IMR-90 (cell line): ENCODE measurements at regions of chr5 and their contacts with region 1.

Region 1: DNA sequence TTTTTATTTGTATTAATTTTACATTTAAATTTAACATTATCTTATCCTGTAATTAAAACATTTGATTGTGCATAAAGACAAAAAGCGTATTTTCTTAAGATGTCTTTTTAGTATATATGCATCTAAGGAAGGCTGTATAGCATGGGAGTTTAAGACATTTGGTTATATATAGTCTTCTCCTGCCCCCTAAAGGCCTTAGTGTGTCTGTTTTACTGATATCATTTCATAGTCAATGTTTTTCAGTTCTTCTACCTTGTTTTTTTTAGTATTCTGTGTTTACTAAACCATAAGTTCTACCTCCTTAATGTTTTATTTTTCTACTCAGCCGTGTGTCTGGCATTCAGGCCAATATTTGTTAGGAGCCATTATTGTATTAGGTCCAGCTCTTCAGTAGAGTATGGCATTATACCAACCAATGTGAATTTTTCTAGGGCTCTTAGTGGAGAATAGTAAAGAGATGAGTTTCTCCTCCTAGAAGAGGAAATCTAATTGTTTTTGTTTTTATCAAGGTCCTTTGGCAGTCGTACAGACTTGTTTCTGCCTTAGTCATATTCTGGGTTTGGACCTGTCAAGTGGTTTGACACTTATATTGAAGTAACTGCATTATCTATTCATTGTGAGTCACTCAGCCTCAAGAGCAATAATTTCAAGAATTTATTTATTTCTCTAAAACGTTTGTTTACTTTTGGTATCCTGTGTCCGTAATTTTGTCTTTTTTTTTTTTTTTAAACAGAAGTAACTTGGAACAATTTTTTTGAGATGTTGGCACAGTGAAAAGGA is 74.8 kb downstream of the SLF1 start:
- DNase-seq: peak; percentile 93
- ATAC-seq: peak; percentile 80
- H3K4me3 ChIP-seq: no peak overlapping the region
- H3K27ac ChIP-seq: no peak overlapping the region
- H3K4me1 ChIP-seq: peaks cover 4% of the 10 kb centered on the region
- H3K27me3 ChIP-seq: no peaks in the 10 kb centered on the region
- CTCF ChIP-seq: peak; percentile 49
- POLR2A ChIP-seq: no peak
- RAD21 ChIP-seq: peak; percentile 50

Region 2: GRCh38 chr5:93915142-93915553 is 778.1 kb before region 1 on chr5:
- CTCF ChIA-PET with region 1: no interaction called
- POLR2A ChIA-PET with region 1: no interaction called
- dilution Hi-C with region 1: no loop called
- in situ Hi-C with region 1: no loop called
- intact Hi-C with region 1: loop called (anchors 10 kb)
- DNase-seq: peak; percentile 73
- ATAC-seq: peak; percentile 56; the same call in 1 of the 2 replicates
- H3K4me3 ChIP-seq: no peak overlapping the region
- H3K27ac ChIP-seq: no peak overlapping the region
- H3K4me1 ChIP-seq: no peaks in the 10 kb centered on the region
- H3K27me3 ChIP-seq: no peaks in the 10 kb centered on the region
- CTCF ChIP-seq: peak; percentile 69
- POLR2A ChIP-seq: no peak
- RAD21 ChIP-seq: peak; percentile 75

Region 3: DNA sequence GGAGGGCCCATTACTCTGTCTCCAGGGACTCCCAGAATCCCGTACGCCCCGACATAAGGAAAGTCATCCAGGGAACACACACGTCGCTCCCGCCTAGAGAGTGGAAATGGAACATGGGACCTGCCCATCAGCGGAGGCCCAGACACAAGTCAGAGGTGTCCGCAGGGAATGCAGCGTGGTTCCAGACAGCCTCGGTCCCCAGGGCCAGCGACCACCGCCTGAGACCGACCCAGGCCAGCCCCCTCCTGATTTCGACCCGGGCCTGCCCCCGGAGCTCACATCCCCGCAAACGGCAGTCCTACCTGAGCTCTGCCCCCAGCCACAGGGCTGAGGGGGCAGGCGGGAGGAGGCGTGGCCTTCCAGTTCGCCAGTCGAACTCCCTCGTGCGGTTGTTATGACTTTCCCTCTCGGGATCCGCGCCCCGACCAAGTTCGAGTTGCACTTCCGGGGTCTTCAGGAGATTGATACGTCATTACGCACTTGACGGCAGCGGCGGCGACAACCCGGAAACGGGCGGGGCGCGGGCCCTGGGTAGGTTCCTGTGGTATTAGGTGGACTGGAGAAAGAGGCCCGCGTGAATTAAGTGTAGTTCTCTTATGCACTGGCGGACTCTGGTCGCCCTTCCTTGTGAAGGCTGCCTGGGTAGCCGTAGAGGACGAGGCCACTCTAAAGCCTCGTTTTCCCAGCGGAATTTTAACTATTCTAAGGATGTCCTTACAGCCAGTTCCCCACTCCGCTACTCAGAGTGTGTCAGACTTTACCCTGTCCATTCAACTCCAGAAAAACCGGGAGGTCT is 581.8 kb before region 1 on chr5:
- CTCF ChIA-PET with region 1: no interaction called
- POLR2A ChIA-PET with region 1: no interaction called
- dilution Hi-C with region 1: no loop called
- in situ Hi-C with region 1: no loop called
- intact Hi-C with region 1: loop called (anchors 2 kb)
- DNase-seq: peak; percentile 95
- ATAC-seq: peak; percentile 97
- H3K4me3 ChIP-seq: peak overlapping the region; percentile 92
- H3K27ac ChIP-seq: peak overlapping the region; percentile 76
- H3K4me1 ChIP-seq: no peaks in the 10 kb centered on the region
- H3K27me3 ChIP-seq: no peaks in the 10 kb centered on the region
- CTCF ChIP-seq: peak; percentile 22; the same call in 1 of the 2 replicates
- POLR2A ChIP-seq: peak; percentile 60; the same call in 1 of the 2 replicates
- RAD21 ChIP-seq: no peak

Region 4: DNA sequence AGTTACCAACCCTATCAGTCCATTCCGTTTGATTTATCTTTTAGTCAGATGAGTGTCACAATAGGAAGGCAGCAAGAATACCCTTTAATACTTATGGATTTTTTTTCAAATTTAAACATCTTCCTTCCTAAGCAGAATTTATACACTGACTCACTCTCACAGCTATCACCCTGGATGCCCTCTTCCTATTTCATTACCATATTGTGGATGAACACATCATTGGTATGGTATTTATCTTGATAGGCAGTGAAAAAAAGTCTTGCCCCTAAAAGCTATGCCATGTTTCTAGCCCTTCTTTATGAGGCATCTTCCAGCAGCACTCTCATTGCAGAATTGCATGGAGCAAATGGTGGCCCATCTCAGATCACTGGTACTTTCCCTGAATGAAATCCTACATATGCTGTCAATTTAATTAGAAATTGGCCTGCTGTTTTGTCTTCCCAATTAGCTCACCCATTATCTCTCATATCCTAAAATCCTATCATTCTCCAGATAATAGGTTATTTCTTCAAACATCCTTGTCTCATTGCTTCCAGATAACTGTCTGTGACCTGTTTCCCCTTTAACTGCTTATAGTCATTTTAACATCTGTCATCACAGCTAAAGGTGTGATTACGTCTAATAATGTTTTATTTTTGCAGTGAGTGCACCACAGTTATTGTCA is 518.4 kb before region 1 on chr5:
- CTCF ChIA-PET with region 1: no interaction called
- POLR2A ChIA-PET with region 1: no interaction called
- dilution Hi-C with region 1: no loop called
- in situ Hi-C with region 1: no loop called
- intact Hi-C with region 1: loop called (anchors 10 kb)
- DNase-seq: peak; percentile 69
- ATAC-seq: peak; percentile 79
- H3K4me3 ChIP-seq: no peak overlapping the region
- H3K27ac ChIP-seq: peak overlapping the region; percentile 37; the same call in 1 of the 2 replicates
- H3K4me1 ChIP-seq: peaks cover 3% of the 10 kb centered on the region; the same call in 1 of the 2 replicates
- H3K27me3 ChIP-seq: no peaks in the 10 kb centered on the region
- CTCF ChIP-seq: no peak
- POLR2A ChIP-seq: no peak
- RAD21 ChIP-seq: no peak

Region 5: DNA sequence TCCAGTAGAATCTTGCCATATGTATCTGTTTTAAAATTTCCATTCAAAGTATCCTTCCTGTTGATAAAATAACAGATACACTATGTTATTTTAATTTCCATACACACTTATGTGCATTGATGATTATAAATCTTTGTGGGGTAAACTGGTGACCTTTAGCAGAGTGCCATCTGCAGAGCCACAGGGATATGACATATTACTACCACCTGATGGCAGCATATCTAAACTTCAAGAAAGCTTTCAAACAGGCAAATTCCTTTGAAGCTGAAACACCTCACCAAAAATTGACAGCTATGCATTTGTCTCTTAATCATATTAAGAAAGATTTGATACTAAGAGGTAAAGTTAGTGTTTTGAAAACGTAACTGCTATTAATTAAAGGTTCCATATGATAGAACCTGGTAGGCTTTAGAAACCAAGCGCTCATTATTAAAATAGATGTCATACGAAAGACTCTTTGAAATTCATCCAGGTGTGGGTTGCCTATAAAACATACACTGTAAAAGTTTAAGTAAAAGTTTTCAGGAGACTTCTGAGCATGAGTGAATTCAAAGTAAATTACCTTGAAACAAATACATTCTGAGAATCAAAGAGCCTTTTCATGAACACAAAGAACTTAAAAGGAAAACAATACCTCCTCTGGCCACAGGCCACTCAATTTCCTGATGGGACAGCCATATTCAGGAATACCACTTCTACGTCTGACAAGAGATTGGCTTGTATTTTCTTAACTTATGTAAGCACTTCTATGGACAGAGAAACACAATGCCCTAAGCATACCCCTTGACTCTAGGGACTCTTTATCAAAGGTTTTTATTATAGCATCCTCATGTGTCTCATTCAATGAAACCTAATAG is 168.2 kb before region 1 on chr5:
- CTCF ChIA-PET with region 1: interaction called, 4 read pairs
- POLR2A ChIA-PET with region 1: no interaction called
- dilution Hi-C with region 1: no loop called
- in situ Hi-C with region 1: no loop called
- intact Hi-C with region 1: loop called (anchors 2 kb)
- DNase-seq: peak; percentile 30
- ATAC-seq: peak; percentile 59; the same call in 1 of the 2 replicates
- H3K4me3 ChIP-seq: no peak overlapping the region
- H3K27ac ChIP-seq: no peak overlapping the region
- H3K4me1 ChIP-seq: no peaks in the 10 kb centered on the region; the same call in 1 of the 2 replicates
- H3K27me3 ChIP-seq: no peaks in the 10 kb centered on the region
- CTCF ChIP-seq: peak; percentile 45
- POLR2A ChIP-seq: no peak
- RAD21 ChIP-seq: peak; percentile 45

Region 6: GRCh38 chr5:94618493-94619328 is 74.5 kb before region 1 on chr5 and contains the starts of genes KIAA0825 and SLF1:
- CTCF ChIA-PET with region 1: no interaction called
- POLR2A ChIA-PET with region 1: no interaction called
- dilution Hi-C with region 1: no loop called
- in situ Hi-C with region 1: no loop called
- intact Hi-C with region 1: loop called (anchors 5 kb)
- DNase-seq: peak; percentile 84
- ATAC-seq: peak; percentile 90
- H3K4me3 ChIP-seq: peak within 1 kb of the TSS; percentile 95
- H3K27ac ChIP-seq: peak within 1 kb of the TSS; percentile 64
- H3K4me1 ChIP-seq: no peaks in the 10 kb centered on the region
- H3K27me3 ChIP-seq: no peaks in the 10 kb centered on the region
- CTCF ChIP-seq: no peak; the same call in 1 of the 2 replicates
- POLR2A ChIP-seq: no peak
- RAD21 ChIP-seq: no peak
- total RNA-seq, gene KIAA0825: 1.8 and 3.9 TPM in 2 replicates
- total RNA-seq, gene SLF1: 3.4 and 7.5 TPM in 2 replicates